Activated B cell treated with CpG ODN at 0.5 μM for 24 hours (primary cell): ENCODE measurements at regions of chr2 and their contacts with region 1.

Region 1: GRCh38 chr2:213151437-213152064 is at the start of gene IKZF2:
- DNase-seq: peak; percentile 78
- ATAC-seq: peak; percentile 82
- H3K4me3 Mint-ChIP-seq: peak within 1 kb of the TSS; percentile 92
- H3K27ac Mint-ChIP-seq: peak within 1 kb of the TSS; percentile 89
- H3K4me1 Mint-ChIP-seq: peaks cover 67% of the 10 kb centered on the region
- H3K27me3 Mint-ChIP-seq: no peaks in the 10 kb centered on the region
- CTCF ChIP-seq: no peak
- total RNA-seq, gene IKZF2: 51.5 and 60.2 TPM in 2 replicates

Region 2: GRCh38 chr2:212777020-212777491 is 374.5 kb before region 1 on chr2:
- CTCF ChIA-PET with region 1: interaction called, 86 read pairs
- POLR2A ChIA-PET with region 1: interaction called, 12 read pairs
- intact Hi-C with region 1: loop called (anchors 1 kb)
- DNase-seq: no peak
- ATAC-seq: peak; percentile 52
- H3K4me3 Mint-ChIP-seq: no peak overlapping the region
- H3K27ac Mint-ChIP-seq: no peak overlapping the region
- H3K4me1 Mint-ChIP-seq: peaks cover 3% of the 10 kb centered on the region
- H3K27me3 Mint-ChIP-seq: peaks cover 2% of the 10 kb centered on the region
- CTCF ChIP-seq: peak; percentile 73

Region 3: DNA sequence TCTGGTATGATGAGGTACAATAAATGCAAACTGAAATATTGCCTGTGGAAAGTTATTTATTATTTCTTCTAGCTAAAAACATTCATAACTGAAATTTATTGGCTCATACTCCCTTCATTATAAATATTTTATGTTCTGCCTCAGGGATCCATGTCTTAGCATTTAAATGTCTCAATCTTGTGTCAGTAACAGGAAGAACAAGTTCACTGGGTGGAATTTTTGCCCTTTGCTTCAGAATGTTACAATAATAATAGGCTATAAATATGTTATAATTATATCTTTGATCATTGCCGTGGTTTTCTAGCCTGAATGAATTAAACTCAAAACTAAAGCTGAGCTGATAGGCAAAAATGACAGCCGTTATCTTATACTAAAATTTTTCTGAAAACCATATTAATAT is 333.5 kb before region 1 on chr2:
- CTCF ChIA-PET with region 1: no interaction called
- POLR2A ChIA-PET with region 1: no interaction called
- intact Hi-C with region 1: no loop called
- DNase-seq: no peak
- ATAC-seq: no peak
- H3K4me3 Mint-ChIP-seq: no peak overlapping the region
- H3K27ac Mint-ChIP-seq: no peak overlapping the region
- H3K4me1 Mint-ChIP-seq: peaks cover 5% of the 10 kb centered on the region
- H3K27me3 Mint-ChIP-seq: peaks cover 2% of the 10 kb centered on the region
- CTCF ChIP-seq: no peak

Region 4: DNA sequence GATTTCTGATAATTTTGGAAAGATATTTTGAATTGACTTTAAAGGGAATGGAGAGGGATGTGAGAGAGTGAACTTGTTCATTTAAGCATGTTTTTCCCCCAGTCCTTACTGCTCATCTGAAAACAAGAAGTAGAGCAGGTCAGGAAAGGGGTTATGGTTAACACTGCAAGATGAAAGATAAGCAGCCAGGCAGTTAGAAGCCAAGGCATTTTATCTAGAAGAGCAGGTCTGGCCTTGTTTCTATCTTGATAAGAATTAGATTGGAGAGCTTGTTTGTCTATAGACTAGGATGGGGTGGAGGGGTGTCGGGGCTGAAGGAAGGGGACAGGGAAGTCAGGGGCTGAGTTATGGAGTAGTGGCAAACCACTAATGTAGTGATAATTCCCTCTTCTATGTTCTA is 171.8 kb before region 1 on chr2:
- CTCF ChIA-PET with region 1: no interaction called
- POLR2A ChIA-PET with region 1: no interaction called
- intact Hi-C with region 1: no loop called
- DNase-seq: no peak
- ATAC-seq: no peak
- H3K4me3 Mint-ChIP-seq: no peak overlapping the region
- H3K27ac Mint-ChIP-seq: no peak overlapping the region
- H3K4me1 Mint-ChIP-seq: peaks cover 3% of the 10 kb centered on the region
- H3K27me3 Mint-ChIP-seq: no peaks in the 10 kb centered on the region
- CTCF ChIP-seq: no peak

Region 5: GRCh38 chr2:213015387-213016165 is 136.0 kb before region 1 on chr2:
- CTCF ChIA-PET with region 1: interaction called, 3 read pairs
- POLR2A ChIA-PET with region 1: interaction called, 4 read pairs
- intact Hi-C with region 1: loop called (anchors 1 kb)
- DNase-seq: no peak
- ATAC-seq: peak; percentile 86
- H3K4me3 Mint-ChIP-seq: peak overlapping the region; percentile 68
- H3K27ac Mint-ChIP-seq: peak overlapping the region; percentile 85
- H3K4me1 Mint-ChIP-seq: peaks cover 38% of the 10 kb centered on the region
- H3K27me3 Mint-ChIP-seq: no peaks in the 10 kb centered on the region
- CTCF ChIP-seq: no peak

Region 6: DNA sequence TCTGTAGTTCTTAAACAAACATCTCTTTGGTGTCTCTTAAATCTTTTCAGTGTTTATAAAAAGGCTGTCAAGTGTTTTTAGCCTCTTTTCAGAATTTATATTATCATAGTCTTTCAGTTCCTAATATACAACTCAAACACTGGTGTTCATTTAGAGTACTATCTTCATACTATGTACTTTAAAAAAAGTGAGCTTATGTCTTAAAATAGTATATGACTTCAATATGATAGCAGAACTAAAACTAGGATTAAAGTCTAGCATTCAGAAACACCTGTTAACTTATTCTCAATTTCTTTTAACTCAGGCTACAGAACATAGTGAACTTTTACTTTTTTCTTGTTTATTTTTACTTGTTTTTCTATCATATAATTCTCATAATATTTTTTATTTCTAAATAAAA is 14.6 kb after region 1 on chr2:
- CTCF ChIA-PET with region 1: interaction called, 11 read pairs
- POLR2A ChIA-PET with region 1: interaction called, 15 read pairs
- intact Hi-C with region 1: loop called (anchors 1 kb)
- DNase-seq: no peak
- ATAC-seq: peak; percentile 86
- H3K4me3 Mint-ChIP-seq: peak overlapping the region; percentile 30
- H3K27ac Mint-ChIP-seq: peak overlapping the region; percentile 93
- H3K4me1 Mint-ChIP-seq: peaks cover 40% of the 10 kb centered on the region
- H3K27me3 Mint-ChIP-seq: no peaks in the 10 kb centered on the region
- CTCF ChIP-seq: no peak

Region 7: DNA sequence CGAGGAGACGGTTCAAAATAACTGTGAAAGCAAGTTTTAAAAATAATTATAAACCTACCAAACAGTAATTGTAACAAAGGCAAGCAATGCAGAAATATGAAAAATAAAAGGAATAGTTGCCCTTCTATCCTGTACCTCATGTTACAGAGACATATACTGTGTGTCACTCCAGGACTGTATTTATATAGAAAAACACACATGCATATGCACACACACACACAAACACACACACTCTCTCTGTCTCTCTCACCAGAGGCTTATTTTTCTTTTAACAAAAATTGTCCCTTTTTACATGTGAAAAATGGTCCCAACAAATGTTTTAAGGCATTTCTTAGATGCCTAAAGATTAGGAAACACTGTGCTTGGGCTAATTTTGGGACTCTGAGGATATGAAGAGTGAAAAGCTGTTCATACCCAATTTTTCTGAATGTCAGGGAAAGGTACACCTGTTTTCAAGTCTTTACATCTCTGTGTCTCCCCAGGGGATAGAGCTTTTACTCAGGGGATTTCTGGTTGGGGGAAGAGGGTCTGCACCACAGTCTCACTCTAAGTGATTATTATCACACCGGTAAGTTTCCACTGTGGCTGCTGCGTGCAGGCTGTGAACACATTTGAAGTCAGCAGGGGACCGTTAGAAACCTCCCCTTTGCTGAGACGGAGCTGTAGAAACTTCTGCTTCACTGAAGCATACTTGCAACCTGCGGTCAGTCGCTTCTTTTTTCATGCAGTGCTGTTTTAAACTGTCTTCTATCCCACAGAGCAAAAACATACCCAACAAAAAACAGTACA is 81.3 kb after region 1 on chr2:
- CTCF ChIA-PET with region 1: interaction called, 10 read pairs
- POLR2A ChIA-PET with region 1: interaction called, 52 read pairs
- intact Hi-C with region 1: loop called (anchors 1 kb)
- DNase-seq: peak; percentile 50
- ATAC-seq: peak; percentile 95
- H3K4me3 Mint-ChIP-seq: peak overlapping the region; percentile 64
- H3K27ac Mint-ChIP-seq: peak overlapping the region; percentile 85
- H3K4me1 Mint-ChIP-seq: peaks cover 81% of the 10 kb centered on the region
- H3K27me3 Mint-ChIP-seq: no peaks in the 10 kb centered on the region
- CTCF ChIP-seq: no peak

Region 8: GRCh38 chr2:213251618-213252017 is 100.1 kb after region 1 on chr2:
- CTCF ChIA-PET with region 1: interaction called, 7 read pairs
- POLR2A ChIA-PET with region 1: interaction called, 6 read pairs
- intact Hi-C with region 1: loop called (anchors 1 kb)
- DNase-seq: no peak
- ATAC-seq: peak; percentile 77
- H3K4me3 Mint-ChIP-seq: no peak overlapping the region
- H3K27ac Mint-ChIP-seq: no peak overlapping the region
- H3K4me1 Mint-ChIP-seq: no peaks in the 10 kb centered on the region
- H3K27me3 Mint-ChIP-seq: peaks cover 3% of the 10 kb centered on the region
- CTCF ChIP-seq: peak; percentile 49